Right cardiac atrium (tissue), 5 donors: ENCODE measurements at regions of chr5 and their contacts with region 1.

Region 1: DNA sequence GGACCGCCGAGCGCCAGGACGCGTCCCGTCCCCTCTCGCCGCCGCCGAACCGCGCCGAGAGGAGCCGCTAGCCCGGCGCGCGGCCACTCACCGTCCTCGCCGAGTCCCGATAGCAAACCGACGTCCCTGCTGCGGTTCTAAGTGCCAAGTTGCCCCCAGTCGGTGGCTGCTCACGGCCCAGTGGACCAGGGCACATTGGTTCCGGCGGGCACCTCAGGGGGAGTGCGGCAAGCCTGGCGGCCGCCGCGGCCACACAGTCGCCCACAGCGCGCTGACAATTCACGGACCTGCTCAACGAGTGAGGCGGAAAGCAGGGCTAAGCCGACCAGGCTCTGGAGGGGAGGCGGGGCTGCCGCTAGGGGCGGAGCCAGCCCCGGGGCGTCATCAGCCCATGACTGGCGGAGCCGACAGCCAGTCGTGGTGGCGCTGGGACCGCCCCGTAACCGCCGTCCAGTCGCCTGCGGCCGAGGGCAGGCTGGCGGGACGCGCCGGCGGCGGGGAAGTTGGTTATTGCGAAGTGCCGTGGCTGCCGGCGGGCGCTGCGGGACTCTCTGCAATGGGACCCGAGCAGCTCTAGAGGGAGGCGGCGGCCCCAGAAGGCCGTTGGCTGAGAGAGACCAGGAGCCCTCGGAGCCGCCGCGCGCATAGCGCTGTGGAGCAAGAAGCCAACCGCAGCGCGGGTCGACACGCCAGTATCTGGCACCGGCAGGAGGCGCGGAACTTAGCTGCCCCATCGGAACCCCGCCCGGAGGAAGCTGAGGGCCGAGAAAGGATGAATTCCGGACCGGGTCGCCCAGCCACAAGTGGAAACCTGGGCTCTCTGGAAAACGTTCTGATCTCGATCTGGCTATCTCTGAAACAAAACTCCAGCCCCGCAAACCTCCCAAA is at the start of gene MARCHF3:
- DNase-seq: peak; percentile 96 to 98 (median 98)
- ATAC-seq: peak; percentile 99
- H3K4me3 ChIP-seq: peak within 1 kb of the TSS; percentile 62
- H3K27ac ChIP-seq: peak within 1 kb of the TSS; percentile 78
- H3K4me1 ChIP-seq: no peaks in the 10 kb centered on the region
- H3K27me3 ChIP-seq: no peaks in the 10 kb centered on the region
- total RNA-seq, gene MARCHF3: 13.4 to 27.0 (median 16.7) TPM

Region 2: DNA sequence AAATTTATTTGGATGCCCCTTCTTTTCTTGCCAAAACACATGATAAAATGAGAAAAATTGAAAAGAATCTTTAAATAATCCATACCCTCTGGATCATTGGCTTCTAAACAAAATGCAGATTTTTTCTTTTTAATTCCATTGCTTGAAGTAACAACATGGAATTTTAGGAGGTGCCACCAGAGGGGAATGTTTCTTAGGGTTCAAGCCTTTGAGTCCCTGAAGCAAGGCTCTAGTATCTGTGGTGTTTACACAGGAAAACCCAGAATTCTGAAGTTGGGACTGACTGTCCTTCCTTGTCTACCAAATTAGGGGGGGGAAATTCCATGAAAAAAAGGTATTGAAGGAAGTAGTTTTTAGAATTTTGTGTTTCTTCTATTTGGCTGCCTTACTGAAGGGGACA is 184.2 kb before region 1 on chr5:
- intact Hi-C with region 1: loop called in 2 of 4 experiments (anchors 5 to 10 kb)
- DNase-seq: no peak
- ATAC-seq: no peak
- H3K4me3 ChIP-seq: no peak overlapping the region
- H3K27ac ChIP-seq: no peak overlapping the region
- H3K4me1 ChIP-seq: peaks cover 3% of the 10 kb centered on the region
- H3K27me3 ChIP-seq: no peaks in the 10 kb centered on the region

Region 3: GRCh38 chr5:126852091-126852571 is 178.4 kb before region 1 on chr5:
- intact Hi-C with region 1: loop called in 2 of 4 experiments (anchors 5 to 10 kb)
- DNase-seq: peak in 1 of 3 donors; percentile 49
- ATAC-seq: peak; percentile 50 to 61
- H3K4me3 ChIP-seq: no peak overlapping the region
- H3K27ac ChIP-seq: peak overlapping the region; percentile 54
- H3K4me1 ChIP-seq: peaks cover 9% of the 10 kb centered on the region
- H3K27me3 ChIP-seq: no peaks in the 10 kb centered on the region

Region 4: DNA sequence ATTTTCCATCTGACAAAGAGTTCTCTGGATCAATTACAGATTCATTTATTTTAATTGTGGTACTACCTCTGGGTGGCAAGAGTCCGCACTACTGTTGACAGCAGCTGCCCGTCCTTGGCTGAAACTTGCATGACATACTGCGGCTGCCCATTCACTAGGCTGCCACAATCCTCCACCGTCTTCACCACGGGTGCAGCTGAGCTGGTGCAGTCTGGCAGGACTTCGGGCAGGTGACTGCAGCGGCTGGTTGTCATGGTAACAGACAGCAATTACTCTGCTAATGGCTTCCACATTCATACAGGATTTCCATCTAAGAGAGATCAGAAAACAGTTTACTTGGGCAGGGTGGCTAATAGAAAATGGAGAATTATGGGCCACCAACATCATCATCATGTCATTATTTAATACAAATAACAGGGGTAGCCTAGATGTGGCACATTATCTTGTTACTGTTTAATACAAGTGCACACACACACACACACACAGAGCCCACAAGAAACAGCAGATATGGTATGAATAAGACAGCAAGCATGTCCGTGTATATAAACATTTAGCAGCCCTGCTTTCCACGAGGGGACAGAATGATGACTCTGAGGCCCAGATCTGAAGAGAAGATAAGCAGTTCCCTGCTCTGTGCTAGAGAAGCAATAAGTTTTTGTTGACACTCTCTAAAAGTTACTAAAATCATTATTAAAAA is 112.4 kb before region 1 on chr5:
- intact Hi-C with region 1: loop called in 1 of 4 experiments (anchors 5 kb)
- DNase-seq: no peak
- ATAC-seq: no peak
- H3K4me3 ChIP-seq: no peak overlapping the region
- H3K27ac ChIP-seq: no peak overlapping the region
- H3K4me1 ChIP-seq: peaks cover 18% of the 10 kb centered on the region
- H3K27me3 ChIP-seq: no peaks in the 10 kb centered on the region

Region 5: GRCh38 chr5:127515693-127516395 is 485.3 kb after region 1 on chr5:
- intact Hi-C with region 1: no loop called
- DNase-seq: no peak
- ATAC-seq: no peak
- H3K4me3 ChIP-seq: no peak overlapping the region
- H3K27ac ChIP-seq: no peak overlapping the region
- H3K4me1 ChIP-seq: no peaks in the 10 kb centered on the region
- H3K27me3 ChIP-seq: no peaks in the 10 kb centered on the region